ENCODE measurements at regions of chr12 and their contacts with region 1.

Region 1: DNA sequence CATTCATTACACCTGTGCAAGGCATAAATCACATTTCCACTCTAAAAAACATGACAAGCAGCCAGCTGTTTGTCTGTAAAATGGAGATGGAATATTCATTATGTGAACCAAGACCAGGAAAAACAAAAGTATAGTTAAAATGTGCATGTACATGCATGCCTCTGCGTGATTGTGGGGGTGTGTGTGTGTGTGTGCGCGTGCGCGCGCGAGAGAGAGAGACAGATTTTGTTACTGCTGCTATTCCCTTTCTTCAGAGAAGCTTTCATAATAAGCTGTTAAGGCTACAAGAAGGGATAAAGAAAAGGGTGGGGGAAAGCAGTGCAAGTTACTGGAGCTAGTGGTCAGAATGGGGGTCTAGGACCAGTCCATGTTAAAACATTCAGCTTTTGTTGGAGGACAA is 430.3 kb downstream of the NAV3 start:
- DNase-seq: no peak
- H3K4me3 ChIP-seq: no peak overlapping the region
- H3K27ac ChIP-seq: no peak overlapping the region
- H3K4me1 ChIP-seq: no peaks in the 10 kb centered on the region
- H3K27me3 ChIP-seq: peaks cover 7% of the 10 kb centered on the region
- CTCF ChIP-seq: no peak

Region 2: DNA sequence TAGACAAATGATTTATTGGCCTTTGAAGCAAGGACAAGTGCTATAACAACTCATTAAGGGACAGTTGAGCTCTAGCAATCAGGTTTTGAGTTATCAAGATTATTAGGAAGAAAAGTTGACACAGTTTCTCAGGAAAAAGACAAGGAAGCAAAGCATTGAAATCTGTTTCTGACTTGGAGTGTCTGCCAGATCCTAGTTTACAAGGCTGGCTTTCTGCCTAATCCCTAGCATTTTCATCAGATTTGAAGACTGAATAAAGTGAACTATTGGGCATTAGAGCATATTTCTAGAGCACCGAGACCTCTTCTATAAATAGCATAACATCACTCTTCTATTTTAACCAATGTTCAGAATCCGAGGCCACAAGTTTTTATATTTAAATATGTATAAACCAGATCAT is 610.6 kb after region 1 on chr12:
- CTCF ChIA-PET with region 1: no interaction called
- POLR2A ChIA-PET with region 1: interaction called, 13 read pairs
- intact Hi-C with region 1: no loop called
- DNase-seq: peak; percentile 76
- H3K4me3 ChIP-seq: peak overlapping the region; percentile 13
- H3K27ac ChIP-seq: peak overlapping the region; percentile 64
- H3K4me1 ChIP-seq: peaks cover 79% of the 10 kb centered on the region
- H3K27me3 ChIP-seq: no peaks in the 10 kb centered on the region
- CTCF ChIP-seq: no peak